MCF 10A (cell line): ENCODE measurements at regions of chr1 and their contacts with region 1.

Region 1: GRCh38 chr1:86515597-86515996 is 31.3 kb upstream of the CLCA4 start:
- DNase-seq: peak; percentile 64
- H3K4me3 Mint-ChIP-seq: no peak overlapping the region
- H3K27ac Mint-ChIP-seq: no peak overlapping the region
- H3K4me1 Mint-ChIP-seq: peaks cover 9% of the 10 kb centered on the region
- H3K27me3 Mint-ChIP-seq: no peaks in the 10 kb centered on the region
- CTCF ChIP-seq: peak; percentile 39

Region 2: DNA sequence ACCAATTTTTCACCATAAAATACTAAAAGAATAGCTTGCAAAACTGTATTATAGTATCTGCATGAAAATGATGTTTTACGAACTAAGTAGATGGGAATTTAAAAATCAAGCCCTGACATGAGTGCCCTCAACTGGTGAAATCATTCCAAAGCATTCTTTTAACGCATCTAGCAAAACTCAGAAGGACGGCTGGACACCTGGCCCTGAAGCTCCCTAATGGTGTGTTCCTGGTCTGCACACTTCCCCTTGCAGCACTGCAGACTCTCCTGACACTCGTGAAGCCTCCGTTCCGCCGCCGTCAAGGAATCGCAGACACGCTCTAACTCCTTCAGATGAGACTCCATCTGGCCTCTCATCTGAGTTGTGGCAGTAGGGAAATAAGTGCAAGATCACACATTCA is 159.3 kb before region 1 on chr1:
- CTCF ChIA-PET with region 1: no interaction called
- POLR2A ChIA-PET with region 1: no interaction called
- intact Hi-C with region 1: no loop called
- DNase-seq: peak; percentile 20
- H3K4me3 Mint-ChIP-seq: no peak overlapping the region
- H3K27ac Mint-ChIP-seq: no peak overlapping the region
- H3K4me1 Mint-ChIP-seq: no peaks in the 10 kb centered on the region
- H3K27me3 Mint-ChIP-seq: no peaks in the 10 kb centered on the region
- CTCF ChIP-seq: no peak

Region 3: GRCh38 chr1:86542626-86543025 is 27.0 kb after region 1 on chr1:
- CTCF ChIA-PET with region 1: interaction called, 12 read pairs
- POLR2A ChIA-PET with region 1: interaction called, 3 read pairs
- intact Hi-C with region 1: no loop called
- DNase-seq: peak; percentile 13
- H3K4me3 Mint-ChIP-seq: no peak overlapping the region
- H3K27ac Mint-ChIP-seq: peak overlapping the region; percentile 65
- H3K4me1 Mint-ChIP-seq: peaks cover 18% of the 10 kb centered on the region
- H3K27me3 Mint-ChIP-seq: no peaks in the 10 kb centered on the region
- CTCF ChIP-seq: no peak

Region 4: GRCh38 chr1:86687595-86687994 is 172.0 kb after region 1 on chr1:
- CTCF ChIA-PET with region 1: interaction called, 19 read pairs
- POLR2A ChIA-PET with region 1: no interaction called
- intact Hi-C with region 1: no loop called
- DNase-seq: peak; percentile 16
- H3K4me3 Mint-ChIP-seq: no peak overlapping the region
- H3K27ac Mint-ChIP-seq: no peak overlapping the region
- H3K4me1 Mint-ChIP-seq: no peaks in the 10 kb centered on the region
- H3K27me3 Mint-ChIP-seq: no peaks in the 10 kb centered on the region
- CTCF ChIP-seq: peak; percentile 39